Cardiac septum (tissue), 1 donor: ENCODE measurements at regions of chr4 and their contacts with region 1.

Region 1: GRCh38 chr4:143882892-143883291 is 22.5 kb downstream of the GYPE start:
- DNase-seq: no peak

Region 2: GRCh38 chr4:144090744-144091143 is 207.9 kb after region 1 on chr4:
- intact Hi-C with region 1: loop called (anchors 10 kb)
- DNase-seq: no peak

Region 3: DNA sequence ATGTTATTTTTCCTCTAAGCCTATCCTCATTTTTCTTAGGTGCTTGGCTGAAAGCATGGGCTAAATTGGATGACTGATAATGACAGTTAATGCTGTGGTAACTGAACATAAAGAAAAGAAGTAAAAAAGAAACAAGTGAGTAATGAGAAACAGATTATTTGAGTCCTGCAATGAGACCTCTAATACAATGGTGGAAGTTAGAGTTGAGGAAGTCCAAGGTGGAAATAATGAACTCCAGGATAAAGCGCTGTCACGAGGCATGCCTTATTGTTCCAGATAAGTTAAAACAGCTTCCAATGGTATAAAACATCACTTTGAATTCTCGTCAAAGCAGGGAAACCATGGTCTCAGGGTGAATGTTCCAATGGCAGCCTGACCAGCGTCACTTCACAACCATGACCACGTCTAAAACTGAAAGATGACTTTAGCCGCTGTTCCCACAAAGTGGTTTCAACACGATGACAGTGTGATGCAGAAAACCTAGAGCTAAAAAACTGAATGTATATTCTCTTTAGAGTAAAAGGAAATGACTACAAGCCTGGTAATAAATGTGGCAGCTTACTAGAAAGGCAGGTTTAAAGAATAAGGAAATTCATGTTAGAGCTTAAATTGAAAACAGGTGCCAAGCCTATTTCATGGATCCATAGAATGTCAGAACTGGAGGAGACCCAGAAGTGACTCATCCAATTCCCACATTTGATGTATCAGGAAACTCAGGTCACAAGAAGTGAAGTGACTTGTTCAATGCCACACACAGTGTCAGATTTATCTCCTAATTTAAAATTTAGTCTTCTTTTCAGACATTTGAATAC is 460.3 kb after region 1 on chr4:
- intact Hi-C with region 1: no loop called
- DNase-seq: no peak